ENCODE measurements at regions of chr1 and their contacts with region 1.

Region 1: GRCh38 chr1:163071405-163072255 is 2.5 kb downstream of the RGS4 start:
- DNase-seq: peak; percentile 64
- H3K4me3 Mint-ChIP-seq: no peak overlapping the region
- H3K27ac Mint-ChIP-seq: no peak overlapping the region
- H3K4me1 Mint-ChIP-seq: no peaks in the 10 kb centered on the region
- H3K27me3 Mint-ChIP-seq: peaks cover 23% of the 10 kb centered on the region

Region 2: GRCh38 chr1:162285149-162285561 is 786.5 kb before region 1 on chr1:
- CTCF ChIA-PET with region 1: no interaction called
- intact Hi-C with region 1: no loop called
- DNase-seq: no peak
- H3K4me3 Mint-ChIP-seq: no peak overlapping the region
- H3K27ac Mint-ChIP-seq: no peak overlapping the region
- H3K4me1 Mint-ChIP-seq: no peaks in the 10 kb centered on the region
- H3K27me3 Mint-ChIP-seq: peaks cover 13% of the 10 kb centered on the region

Region 3: GRCh38 chr1:162854245-162854882 is 217.3 kb before region 1 on chr1:
- CTCF ChIA-PET with region 1: interaction called, 4 read pairs
- intact Hi-C with region 1: loop called (anchors 2 kb)
- DNase-seq: peak; percentile 79
- H3K4me3 Mint-ChIP-seq: no peak overlapping the region
- H3K27ac Mint-ChIP-seq: no peak overlapping the region
- H3K4me1 Mint-ChIP-seq: no peaks in the 10 kb centered on the region
- H3K27me3 Mint-ChIP-seq: no peaks in the 10 kb centered on the region

Region 4: GRCh38 chr1:162878000-162878596 is 193.5 kb before region 1 on chr1:
- CTCF ChIA-PET with region 1: no interaction called
- intact Hi-C with region 1: loop called (anchors 1 kb)
- DNase-seq: peak; percentile 64
- H3K4me3 Mint-ChIP-seq: no peak overlapping the region
- H3K27ac Mint-ChIP-seq: no peak overlapping the region
- H3K4me1 Mint-ChIP-seq: no peaks in the 10 kb centered on the region
- H3K27me3 Mint-ChIP-seq: peaks cover 34% of the 10 kb centered on the region

Region 5: DNA sequence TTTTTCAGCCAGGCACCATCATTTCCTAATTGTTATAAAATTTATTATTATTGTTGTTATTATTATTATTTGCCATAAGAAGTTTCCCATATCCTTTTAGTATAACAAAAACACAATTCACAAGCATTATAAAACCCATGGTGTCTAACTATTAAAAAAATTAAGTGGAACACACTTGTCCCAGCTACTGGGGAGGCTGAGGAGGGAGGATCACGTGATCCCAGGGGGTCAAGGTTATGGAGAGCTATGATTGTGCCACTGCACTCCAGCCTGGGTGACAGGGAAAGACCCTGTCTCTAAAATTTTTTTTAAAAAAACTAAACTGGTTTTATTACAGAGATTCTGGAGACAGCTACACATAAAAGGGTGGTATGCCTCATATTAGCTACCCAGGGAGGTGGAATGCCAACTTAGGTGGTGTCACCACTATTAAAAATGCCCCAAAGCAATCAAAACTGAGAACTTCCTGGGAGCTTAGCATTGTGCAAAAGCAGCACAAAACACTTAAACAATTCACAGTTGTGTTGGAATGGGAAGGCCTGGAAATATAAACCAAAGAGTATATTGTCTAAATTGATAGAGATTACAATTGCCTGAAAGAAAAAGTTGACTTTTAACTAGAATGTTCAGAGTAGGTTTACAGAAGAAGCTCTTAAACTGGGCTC is 11.2 kb before region 1 on chr1:
- CTCF ChIA-PET with region 1: interaction called, 11 read pairs
- intact Hi-C with region 1: no loop called
- DNase-seq: no peak
- H3K4me3 Mint-ChIP-seq: no peak overlapping the region
- H3K27ac Mint-ChIP-seq: no peak overlapping the region
- H3K4me1 Mint-ChIP-seq: no peaks in the 10 kb centered on the region
- H3K27me3 Mint-ChIP-seq: peaks cover 9% of the 10 kb centered on the region

Region 6: GRCh38 chr1:163315773-163316374 is 244.2 kb after region 1 on chr1:
- CTCF ChIA-PET with region 1: interaction called, 13 read pairs
- intact Hi-C with region 1: loop called (anchors 1 kb)
- DNase-seq: peak; percentile 70
- H3K4me3 Mint-ChIP-seq: no peak overlapping the region
- H3K27ac Mint-ChIP-seq: no peak overlapping the region
- H3K4me1 Mint-ChIP-seq: peaks cover 2% of the 10 kb centered on the region
- H3K27me3 Mint-ChIP-seq: no peaks in the 10 kb centered on the region

Region 7: DNA sequence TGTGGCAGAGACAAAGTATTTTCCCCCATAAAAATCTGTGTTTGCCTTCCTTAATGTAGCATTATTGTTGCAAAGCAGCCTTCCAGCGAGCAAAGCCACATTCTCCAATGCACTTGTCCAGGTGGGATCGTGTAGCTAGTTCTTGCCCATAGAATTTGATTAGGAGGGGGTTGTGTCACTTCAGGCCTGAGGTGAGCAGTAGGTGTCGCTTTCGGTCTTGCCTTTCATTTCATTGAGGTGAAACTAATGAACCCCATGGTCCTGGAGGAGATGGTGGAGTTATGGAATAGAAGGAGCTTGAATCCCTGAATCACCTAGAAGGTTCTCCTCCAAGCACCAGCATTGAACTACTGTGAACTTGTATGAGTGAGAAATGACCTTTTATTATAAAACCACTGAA is 1168.5 kb after region 1 on chr1:
- CTCF ChIA-PET with region 1: no interaction called
- intact Hi-C with region 1: no loop called
- DNase-seq: no peak
- H3K4me3 Mint-ChIP-seq: no peak overlapping the region
- H3K27ac Mint-ChIP-seq: no peak overlapping the region
- H3K4me1 Mint-ChIP-seq: no peaks in the 10 kb centered on the region
- H3K27me3 Mint-ChIP-seq: no peaks in the 10 kb centered on the region